Psoas muscle (tissue), 8 donors: ENCODE measurements at regions of chr19 and their contacts with region 1.

Region 1: DNA sequence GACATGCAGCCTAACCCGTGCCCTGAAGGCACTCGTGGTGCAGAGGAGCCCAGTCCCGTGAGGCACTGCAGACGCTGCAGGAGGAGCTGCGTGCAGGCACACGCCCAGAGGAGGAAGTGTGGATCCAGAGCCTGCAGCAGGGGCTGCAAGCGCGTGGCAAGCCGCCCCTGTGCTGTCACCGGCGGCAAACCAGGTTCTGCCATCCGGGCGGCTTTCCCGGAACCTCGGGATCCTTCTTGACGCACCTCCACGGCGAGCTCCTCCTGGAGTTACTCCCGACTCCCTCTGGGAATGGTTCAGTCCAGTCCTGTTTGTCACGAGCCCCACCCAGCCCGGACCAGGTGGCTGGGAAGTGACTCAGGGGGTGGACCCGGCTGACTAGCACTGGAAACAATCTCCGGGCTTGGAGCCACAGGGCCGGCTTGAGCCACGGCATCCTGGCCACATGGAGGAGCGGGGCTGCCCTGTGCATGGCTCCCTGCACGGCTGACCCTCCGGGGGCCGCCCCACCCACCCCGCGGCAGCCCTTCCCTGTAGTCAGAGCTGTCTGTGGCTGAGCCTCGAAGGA is 10.2 kb downstream of the DPP9 start:
- DNase-seq: peak; percentile 95 to 98
- ATAC-seq: peak; percentile 84 to 91 (median 86)
- H3K4me3 ChIP-seq: peak overlapping the region; percentile 45
- H3K27ac ChIP-seq: peak overlapping the region; percentile 99
- H3K4me1 ChIP-seq: peaks cover 59% of the 10 kb centered on the region
- H3K27me3 ChIP-seq: no peaks in the 10 kb centered on the region
- CTCF ChIP-seq: no peak

Region 2: DNA sequence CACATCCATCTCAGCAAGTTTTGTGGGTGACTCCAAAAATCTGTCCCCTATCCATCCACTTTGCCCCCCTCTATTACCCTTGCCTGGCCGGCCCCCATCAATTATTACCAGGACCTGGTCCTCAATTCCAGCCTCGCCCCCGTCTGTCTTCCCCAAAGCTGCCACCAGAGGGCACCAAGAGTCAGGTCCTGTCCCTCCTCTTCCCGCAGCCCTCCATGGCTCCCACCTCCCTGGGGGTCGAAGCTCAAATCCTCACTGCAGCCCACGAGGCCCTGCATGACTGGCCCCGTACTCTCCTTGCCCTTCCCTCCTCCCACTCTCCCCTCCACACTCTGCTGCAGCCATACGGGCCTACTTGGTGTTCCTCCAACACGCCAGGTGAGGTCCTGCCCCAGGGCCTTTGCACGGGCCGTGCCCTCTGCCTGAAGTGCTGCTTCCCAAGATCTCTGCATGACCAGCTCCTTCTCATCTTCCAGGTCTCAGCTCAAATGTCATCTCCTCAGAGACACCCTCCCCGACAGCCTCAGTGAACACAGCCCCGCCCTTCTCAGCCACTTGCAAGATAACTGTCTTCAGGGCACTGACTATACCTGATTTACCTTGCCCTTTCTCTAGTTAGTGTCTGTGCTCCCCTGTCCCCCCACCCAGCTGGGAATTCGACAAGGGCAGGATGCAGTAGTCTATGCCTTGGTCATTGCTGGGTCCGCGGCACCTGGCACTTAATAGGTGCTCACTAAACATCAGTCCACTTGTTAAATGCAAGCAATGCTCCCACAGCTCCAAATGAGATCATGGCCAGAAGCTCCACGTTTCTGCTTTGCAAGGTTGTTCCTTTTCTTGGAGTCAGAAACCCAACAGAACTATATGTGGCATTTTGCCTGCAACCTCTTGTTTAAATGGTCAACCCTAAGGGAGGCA is 137.2 kb before region 1 on chr19:
- intact Hi-C with region 1: loop called in 1 of 2 experiments (anchors 5 kb)
- DNase-seq: peak; percentile 70 to 80
- ATAC-seq: peak; percentile 59 to 78 (median 65)
- H3K4me3 ChIP-seq: no peak overlapping the region
- H3K27ac ChIP-seq: peak overlapping the region; percentile 69
- H3K4me1 ChIP-seq: no peaks in the 10 kb centered on the region
- H3K27me3 ChIP-seq: peaks cover 0 to 18% (median 9%) of the 10 kb centered on the region in 3 donors
- CTCF ChIP-seq: peak; percentile 70

Region 3: GRCh38 chr19:4676955-4677731 is 36.3 kb before region 1 on chr19:
- intact Hi-C with region 1: loop called in 1 of 2 experiments (anchors 5 kb)
- DNase-seq: peak; percentile 69 to 87
- ATAC-seq: peak; percentile 80 to 83 (median 82)
- H3K4me3 ChIP-seq: peak overlapping the region; percentile 20
- H3K27ac ChIP-seq: peak overlapping the region; percentile 84
- H3K4me1 ChIP-seq: peaks cover 11% of the 10 kb centered on the region
- H3K27me3 ChIP-seq: no peaks in the 10 kb centered on the region
- CTCF ChIP-seq: peak; percentile 66